Activated CD4-positive, alpha-beta memory T cell treated with anti-CD3 and anti-CD28 coated beads for 36 hours (primary cell): ENCODE measurements at regions of chr14 and their contacts with region 1.

Region 1: GRCh38 chr14:103078093-103078749 is 5.8 kb upstream of the LBHD2 start:
- DNase-seq: peak; percentile 83
- H3K4me3 Mint-ChIP-seq: no peak overlapping the region
- H3K27ac Mint-ChIP-seq: no peak overlapping the region
- H3K4me1 Mint-ChIP-seq: no peaks in the 10 kb centered on the region
- H3K27me3 Mint-ChIP-seq: peaks cover 4% of the 10 kb centered on the region

Region 2: DNA sequence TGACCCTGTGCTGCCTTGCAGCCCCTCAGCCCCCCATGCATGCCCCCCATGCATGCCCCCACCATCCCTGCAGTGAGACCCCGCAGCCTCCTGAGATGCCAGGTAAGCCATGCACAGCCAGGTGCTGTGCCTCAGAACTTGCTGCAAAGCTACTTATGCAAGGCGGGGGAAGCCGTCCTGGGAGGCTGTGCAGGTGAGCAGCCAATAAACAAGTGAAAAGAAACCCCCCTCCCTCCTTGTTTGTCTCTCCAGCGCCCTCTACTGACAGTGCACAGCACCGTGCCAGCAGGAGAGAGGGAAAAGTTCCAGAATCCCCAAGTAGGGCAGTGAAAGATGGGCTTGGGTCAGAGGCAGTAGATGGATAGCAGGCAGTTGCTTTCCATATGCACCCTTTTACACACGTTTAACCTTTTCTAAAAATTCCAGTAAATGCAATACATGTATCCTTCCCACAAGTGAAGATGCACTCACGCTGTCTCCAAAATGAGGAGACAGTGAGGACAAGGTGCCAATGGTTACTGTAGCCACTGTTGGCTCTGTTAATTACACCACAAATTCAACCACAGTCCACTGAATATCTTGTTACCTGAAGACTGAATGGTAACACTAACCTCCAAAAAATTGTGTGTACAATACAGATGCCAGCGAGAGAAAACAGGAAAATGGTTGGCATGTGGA is 63.0 kb after region 1 on chr14:
- CTCF ChIA-PET with region 1: interaction called, 3 read pairs
- POLR2A ChIA-PET with region 1: no interaction called
- intact Hi-C with region 1: loop called (anchors 1 kb)
- DNase-seq: peak; percentile 57
- H3K4me3 Mint-ChIP-seq: no peak overlapping the region
- H3K27ac Mint-ChIP-seq: no peak overlapping the region
- H3K4me1 Mint-ChIP-seq: peaks cover 6% of the 10 kb centered on the region
- H3K27me3 Mint-ChIP-seq: peaks cover 34% of the 10 kb centered on the region

Region 3: GRCh38 chr14:103292426-103293374 is 214.5 kb after region 1 on chr14:
- CTCF ChIA-PET with region 1: interaction called, 34 read pairs
- POLR2A ChIA-PET with region 1: interaction called, 6 read pairs
- intact Hi-C with region 1: loop called (anchors 1 kb)
- DNase-seq: peak; percentile 85
- H3K4me3 Mint-ChIP-seq: no peak overlapping the region
- H3K27ac Mint-ChIP-seq: peak overlapping the region; percentile 28
- H3K4me1 Mint-ChIP-seq: peaks cover 4% of the 10 kb centered on the region
- H3K27me3 Mint-ChIP-seq: peaks cover 21% of the 10 kb centered on the region